ENCODE measurements at regions of chr1 and their contacts with region 1.

Region 1: DNA sequence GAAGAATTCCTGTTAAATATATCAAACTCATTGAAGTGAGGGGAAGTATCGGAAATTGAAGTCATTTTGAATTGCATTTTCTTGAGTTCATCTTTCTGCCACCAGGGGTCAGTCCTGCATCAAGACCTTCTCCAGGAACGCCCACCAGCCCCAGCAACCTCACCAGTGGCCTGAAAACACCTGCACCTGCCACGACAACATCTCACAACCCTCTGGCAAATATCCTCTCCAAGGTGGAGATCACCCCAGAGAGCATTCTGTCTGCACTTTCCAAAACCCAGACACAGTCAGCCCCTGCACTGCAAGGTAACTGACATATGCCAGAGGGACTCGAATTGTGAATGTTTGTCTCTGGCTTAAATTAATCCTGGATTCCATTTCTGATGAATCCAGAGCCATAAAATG is 22.8 kb upstream of the TARS2 start:
- DNase-seq: peak; percentile 29 to 67
- ATAC-seq: peak in 6 of 8 donors; percentile 51 to 63 (median 60)
- H3K4me3 ChIP-seq: no peak overlapping the region
- H3K27ac ChIP-seq: no peak overlapping the region
- H3K4me1 ChIP-seq: peaks cover 0 to 6% (median 0%) of the 10 kb centered on the region in 9 donors
- H3K27me3 ChIP-seq: no peaks in the 10 kb centered on the region
- CTCF ChIP-seq: peak; percentile 59 to 84 (median 80)

Region 2: DNA sequence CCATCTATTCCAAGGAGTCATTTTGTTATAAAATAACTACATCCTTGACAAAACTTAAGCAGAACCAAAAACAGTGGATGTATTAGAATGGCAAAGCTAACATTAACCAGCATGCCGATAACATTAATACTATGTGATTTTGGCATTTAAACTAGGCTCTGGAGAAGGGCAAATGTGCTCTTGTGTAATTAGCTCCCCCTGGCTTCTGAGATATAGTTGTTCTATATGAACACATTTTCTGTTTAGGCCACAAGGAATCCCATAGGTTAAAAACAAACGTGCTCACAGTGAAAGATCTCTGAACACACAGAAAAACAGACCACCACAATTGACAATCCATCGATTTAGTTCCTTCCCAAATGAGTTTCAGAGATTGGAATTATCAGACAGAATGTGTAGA is 34.6 kb before region 1 on chr1:
- intact Hi-C with region 1: no loop called
- DNase-seq: no peak
- ATAC-seq: no peak
- H3K4me3 ChIP-seq: no peak overlapping the region
- H3K27ac ChIP-seq: no peak overlapping the region
- H3K4me1 ChIP-seq: no peaks in the 10 kb centered on the region
- H3K27me3 ChIP-seq: no peaks in the 10 kb centered on the region
- CTCF ChIP-seq: peak in 6 of 9 donors; percentile 15 to 35 (median 20)

Region 3: GRCh38 chr1:150532868-150533302 is 68.5 kb after region 1 on chr1:
- intact Hi-C with region 1: loop called in 3 of 10 experiments (anchors 1 to 5 kb)
- DNase-seq: no peak
- ATAC-seq: peak in 2 of 8 donors; percentile 3 to 9
- H3K4me3 ChIP-seq: no peak overlapping the region
- H3K27ac ChIP-seq: peak overlapping the region in 9 of 10 donors; percentile 17 to 89 (median 72)
- H3K4me1 ChIP-seq: peaks cover 2 to 62% (median 27%) of the 10 kb centered on the region in 9 donors
- H3K27me3 ChIP-seq: no peaks in the 10 kb centered on the region
- CTCF ChIP-seq: peak in 4 of 9 donors; percentile 4 to 38 (median 24)

Region 4: DNA sequence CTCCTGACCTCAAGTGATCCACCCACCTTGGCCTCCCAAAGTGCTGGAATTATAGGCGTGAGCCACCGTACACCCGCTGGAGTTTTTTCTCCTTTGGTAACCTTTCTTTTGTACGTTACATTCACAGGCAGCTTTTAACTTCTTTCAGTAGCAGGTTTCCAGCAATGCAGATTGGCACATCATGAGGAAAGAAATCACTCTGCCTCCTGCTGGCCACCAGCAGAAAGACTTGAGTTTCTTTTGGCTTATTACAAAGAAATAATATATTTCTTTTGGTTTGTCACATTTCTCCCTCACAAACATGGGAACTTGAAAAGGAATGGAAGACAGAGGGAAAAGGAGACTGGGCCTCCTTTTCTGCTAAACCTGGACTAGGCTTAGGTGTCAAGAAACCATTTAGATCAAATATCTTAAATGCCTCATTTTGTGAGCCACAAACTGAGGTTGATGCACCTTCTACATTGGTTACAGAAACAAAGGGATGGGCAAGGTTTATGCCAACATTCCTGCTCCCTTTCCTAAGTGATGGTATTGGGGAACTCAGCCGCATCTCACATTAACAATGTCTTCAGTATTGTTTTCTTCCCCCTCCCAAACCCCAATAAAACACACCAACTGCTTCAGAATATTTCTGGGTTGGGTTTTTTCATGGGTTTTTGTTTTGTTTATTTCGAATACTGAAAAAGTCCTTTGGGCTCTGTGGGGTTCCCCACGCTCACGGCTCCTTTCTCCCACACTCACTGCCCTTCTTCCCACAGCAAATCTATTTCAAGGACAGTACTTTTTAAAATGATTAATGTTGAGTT is 157.3 kb after region 1 on chr1:
- intact Hi-C with region 1: loop called in 6 of 10 experiments (anchors 5 to 10 kb)
- DNase-seq: peak in 1 of 2 donors; percentile 57
- ATAC-seq: peak in 4 of 8 donors; percentile 27 to 53 (median 38)
- H3K4me3 ChIP-seq: no peak overlapping the region
- H3K27ac ChIP-seq: peak overlapping the region; percentile 32 to 87 (median 76)
- H3K4me1 ChIP-seq: peaks cover 8 to 57% (median 49%) of the 10 kb centered on the region in 9 donors
- H3K27me3 ChIP-seq: no peaks in the 10 kb centered on the region
- CTCF ChIP-seq: peak; percentile 51 to 80 (median 71)

Region 5: DNA sequence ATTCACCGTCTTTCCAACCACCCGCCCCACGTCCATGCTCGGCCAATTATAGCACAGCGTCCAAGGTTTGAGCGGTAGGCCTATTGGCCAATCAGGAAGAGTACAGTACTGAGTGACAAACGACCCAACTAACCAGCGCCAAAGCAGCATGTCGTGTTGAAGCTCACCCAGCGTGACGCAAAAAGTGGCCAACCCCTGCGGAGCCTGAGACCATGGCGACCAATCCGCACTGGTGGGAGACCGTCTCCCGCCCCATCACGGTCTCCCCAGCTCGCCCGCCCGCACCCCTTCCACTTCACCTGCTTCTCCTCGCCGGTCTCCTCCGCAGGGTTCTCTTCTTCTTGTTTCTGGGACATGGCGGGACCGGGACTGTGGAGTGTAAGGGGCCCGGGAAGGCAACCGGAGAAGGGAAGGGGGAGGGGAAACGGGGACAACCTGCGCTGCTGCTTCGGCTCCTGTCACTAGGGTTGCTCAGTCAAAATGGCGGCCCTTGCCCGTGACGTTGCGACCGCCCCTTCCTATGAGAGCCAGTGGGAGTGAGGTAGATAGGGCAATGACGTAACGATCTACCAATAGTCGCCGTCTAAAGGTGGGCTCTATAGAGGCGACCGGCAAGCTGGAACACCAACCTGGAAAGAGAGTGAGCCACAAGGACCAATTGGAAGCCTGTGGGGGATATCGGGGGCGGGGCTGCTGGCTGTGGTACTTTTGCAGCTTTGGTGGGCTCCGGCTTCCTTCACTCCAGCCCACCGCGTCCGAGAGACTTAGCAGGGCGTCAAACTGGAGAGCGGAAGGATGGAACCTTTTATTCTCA is 164.9 kb after region 1 on chr1 and contains the start of gene ENSA:
- intact Hi-C with region 1: loop called in 6 of 10 experiments (anchors 5 to 10 kb)
- DNase-seq: peak; percentile 95 to 99
- ATAC-seq: peak; percentile 96 to 98 (median 97)
- H3K4me3 ChIP-seq: peak within 1 kb of the TSS; percentile 48 to 81 (median 66)
- H3K27ac ChIP-seq: peak within 1 kb of the TSS; percentile 83 to 100 (median 96)
- H3K4me1 ChIP-seq: peaks cover 3 to 54% (median 24%) of the 10 kb centered on the region in 9 donors
- H3K27me3 ChIP-seq: no peaks in the 10 kb centered on the region
- CTCF ChIP-seq: no peak
- total RNA-seq, gene ENSA: 115 to 148 (median 132) TPM

Region 6: GRCh38 chr1:150813058-150813707 is 348.8 kb after region 1 on chr1:
- intact Hi-C with region 1: loop called in 3 of 10 experiments (anchors 5 to 10 kb)
- DNase-seq: peak; percentile 45
- ATAC-seq: peak in 6 of 8 donors; percentile 65 to 85 (median 72)
- H3K4me3 ChIP-seq: no peak overlapping the region
- H3K27ac ChIP-seq: no peak overlapping the region
- H3K4me1 ChIP-seq: peaks cover 0 to 11% (median 0%) of the 10 kb centered on the region in 9 donors
- H3K27me3 ChIP-seq: no peaks in the 10 kb centered on the region
- CTCF ChIP-seq: peak; percentile 25 to 74 (median 58)